ENCODE measurements at regions of chr13 and their contacts with region 1.

Region 1: DNA sequence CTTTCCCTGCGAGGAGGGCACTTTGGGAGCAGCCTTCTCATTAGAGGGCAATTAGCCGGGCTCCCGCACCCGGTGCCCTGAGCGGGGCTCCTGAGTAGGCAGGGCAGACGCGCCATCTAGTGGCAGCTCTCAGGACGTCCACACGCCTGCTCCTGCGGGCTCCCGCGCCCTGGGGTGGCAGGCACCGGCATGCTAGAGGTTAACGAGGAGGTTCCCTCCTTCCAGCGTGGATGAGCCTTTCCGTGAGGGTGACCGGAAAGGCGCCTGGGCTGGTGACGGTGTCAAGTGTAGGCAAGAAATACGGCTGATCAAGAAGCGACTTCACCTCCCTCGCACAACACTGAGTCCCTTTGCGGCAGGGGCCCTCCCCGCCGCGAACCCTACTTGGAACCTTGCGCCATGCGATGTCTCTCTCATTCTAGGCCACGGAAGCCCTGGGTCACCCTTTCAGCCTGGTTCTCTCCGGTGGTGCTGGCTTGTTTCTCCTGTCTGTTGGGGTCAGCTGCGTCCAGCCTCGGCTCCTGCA is 67.7 kb downstream of the ALOX5AP start:
- DNase-seq: peak; percentile 93
- H3K4me3 ChIP-seq: peak overlapping the region; percentile 17 to 50 (median 46)
- H3K27ac ChIP-seq: peak overlapping the region; percentile 36 to 76 (median 64)
- H3K4me1 ChIP-seq: peaks cover 0 to 30% (median 13%) of the 10 kb centered on the region in 4 donors
- H3K27me3 ChIP-seq: no peaks in the 10 kb centered on the region
- CTCF ChIP-seq: peak; percentile 87 to 94 (median 91)
- EP300 ChIP-seq: peak in 1 of 4 donors; percentile 3
- POLR2A ChIP-seq: no peak

Region 2: DNA sequence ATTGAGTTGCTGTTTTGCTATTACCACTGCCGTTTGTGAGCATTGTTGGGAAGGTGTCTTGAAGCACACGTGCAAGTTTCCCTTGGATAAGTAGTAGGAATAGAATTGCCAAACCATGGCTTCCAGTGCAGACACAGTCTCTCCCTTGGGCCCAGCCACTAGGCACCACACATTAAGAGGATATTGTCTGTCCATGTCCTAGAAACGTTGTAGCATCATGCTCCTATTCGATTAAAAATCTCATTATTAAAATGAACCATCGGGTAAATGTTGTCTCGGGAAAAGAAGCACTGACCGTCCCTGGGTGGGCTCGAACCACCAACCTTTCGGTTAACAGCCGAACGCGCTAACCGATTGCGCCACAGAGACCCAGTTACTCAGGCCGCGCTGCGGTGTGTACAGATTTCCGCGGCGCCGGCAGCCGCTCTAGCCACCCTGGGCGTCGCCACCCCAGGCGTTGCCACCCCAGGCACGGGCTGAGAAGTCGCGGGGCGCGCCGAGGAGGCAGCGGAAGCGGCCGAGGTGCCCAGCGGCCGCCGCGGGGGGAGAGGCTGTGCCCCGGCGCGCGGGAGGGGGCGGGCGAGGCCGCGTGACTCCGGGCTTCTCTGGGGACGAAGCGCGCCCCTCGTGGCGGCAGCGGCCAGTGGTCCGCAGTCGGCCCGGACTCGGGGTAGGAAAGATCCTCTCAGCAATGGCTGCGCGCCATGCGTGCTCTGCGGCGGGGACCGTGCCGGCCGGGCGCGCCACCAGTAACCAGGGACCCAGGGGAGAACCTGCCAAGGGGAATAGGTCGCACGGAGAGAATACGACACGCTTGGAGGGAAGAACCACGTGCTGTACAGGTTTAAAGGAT is 129.1 kb before region 1 on chr13:
- intact Hi-C with region 1: loop called (anchors 5 kb)
- DNase-seq: peak; percentile 91
- H3K4me3 ChIP-seq: peak overlapping the region; percentile 18 to 61 (median 48)
- H3K27ac ChIP-seq: peak overlapping the region; percentile 74 to 83 (median 78)
- H3K4me1 ChIP-seq: peaks cover 0 to 11% (median 3%) of the 10 kb centered on the region in 4 donors
- H3K27me3 ChIP-seq: no peaks in the 10 kb centered on the region
- CTCF ChIP-seq: peak in 3 of 4 experiments; percentile 11 to 79 (median 49)
- EP300 ChIP-seq: no peak
- POLR2A ChIP-seq: no peak

Region 3: GRCh38 chr13:31044377-31045285 is 241.6 kb after region 1 on chr13:
- intact Hi-C with region 1: loop called (anchors 5 kb)
- DNase-seq: peak; percentile 89
- H3K4me3 ChIP-seq: no peak overlapping the region
- H3K27ac ChIP-seq: no peak overlapping the region
- H3K4me1 ChIP-seq: peaks cover 0 to 28% (median 21%) of the 10 kb centered on the region in 4 donors
- H3K27me3 ChIP-seq: no peaks in the 10 kb centered on the region
- CTCF ChIP-seq: peak; percentile 50 to 95 (median 88)
- EP300 ChIP-seq: no peak
- POLR2A ChIP-seq: no peak

Measured in sigmoid colon (tissue), 7 donors.